Head of caudate nucleus (tissue), 42 donors: ENCODE measurements at regions of chr6 and their contacts with region 1.

Region 1: DNA sequence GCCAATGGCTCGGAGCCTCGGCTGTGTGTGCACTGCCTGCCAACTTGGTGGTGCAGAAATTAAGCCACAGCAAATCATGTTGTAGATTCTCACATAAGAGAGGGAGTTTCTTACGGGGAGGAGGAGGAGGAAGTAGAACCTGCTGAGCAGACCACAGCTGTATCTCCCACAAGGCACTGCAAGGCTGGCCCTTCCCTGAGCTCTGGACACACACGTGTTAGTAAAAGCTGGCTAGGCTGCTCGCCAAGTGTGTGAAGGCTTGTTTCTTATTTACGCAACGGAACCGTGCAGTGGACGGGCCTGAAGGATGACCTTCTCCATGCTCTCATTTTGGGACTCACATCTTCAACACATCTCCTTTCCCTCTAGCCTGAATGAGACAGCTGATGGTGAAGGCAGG is 15.7 kb upstream of the QKI start:
- DNase-seq: peak in 37 of 42 donors; percentile 19 to 76 (median 59)

Region 2: GRCh38 chr6:162951164-162951743 is 447.6 kb before region 1 on chr6:
- intact Hi-C with region 1: no loop called
- DNase-seq: no peak

Region 3: DNA sequence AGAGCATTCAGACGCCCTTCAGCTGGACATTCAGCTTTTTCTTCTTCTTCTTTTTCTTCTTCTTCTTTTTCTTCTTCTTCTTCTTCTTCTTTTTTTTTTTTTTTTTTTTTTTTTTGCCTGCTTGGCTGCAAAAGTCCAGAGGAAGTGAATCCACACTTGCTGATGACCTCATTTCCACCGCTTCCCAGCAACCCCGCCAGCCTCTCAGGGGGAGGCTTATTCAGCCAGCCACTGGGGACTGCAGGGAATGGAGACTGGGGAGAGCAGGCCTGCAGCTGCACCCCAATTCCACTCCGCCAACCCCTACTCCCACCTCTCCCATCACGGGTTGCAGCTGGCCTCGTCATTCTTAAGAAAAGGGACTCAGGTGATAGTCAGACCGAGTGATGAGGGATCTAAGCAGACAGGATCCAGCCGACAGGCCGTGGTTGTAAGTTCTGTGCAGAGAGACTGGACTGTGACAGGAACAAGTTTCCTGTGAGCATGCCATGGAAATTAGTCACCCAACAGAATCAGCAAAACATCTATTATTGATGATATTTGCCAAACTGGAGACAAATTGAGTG is 43.3 kb before region 1 on chr6:
- intact Hi-C with region 1: loop called (anchors 5 kb)
- DNase-seq: peak in 41 of 42 donors; percentile 43 to 90 (median 75)